ENCODE measurements at regions of chr10 and their contacts with region 1.

Region 1: DNA sequence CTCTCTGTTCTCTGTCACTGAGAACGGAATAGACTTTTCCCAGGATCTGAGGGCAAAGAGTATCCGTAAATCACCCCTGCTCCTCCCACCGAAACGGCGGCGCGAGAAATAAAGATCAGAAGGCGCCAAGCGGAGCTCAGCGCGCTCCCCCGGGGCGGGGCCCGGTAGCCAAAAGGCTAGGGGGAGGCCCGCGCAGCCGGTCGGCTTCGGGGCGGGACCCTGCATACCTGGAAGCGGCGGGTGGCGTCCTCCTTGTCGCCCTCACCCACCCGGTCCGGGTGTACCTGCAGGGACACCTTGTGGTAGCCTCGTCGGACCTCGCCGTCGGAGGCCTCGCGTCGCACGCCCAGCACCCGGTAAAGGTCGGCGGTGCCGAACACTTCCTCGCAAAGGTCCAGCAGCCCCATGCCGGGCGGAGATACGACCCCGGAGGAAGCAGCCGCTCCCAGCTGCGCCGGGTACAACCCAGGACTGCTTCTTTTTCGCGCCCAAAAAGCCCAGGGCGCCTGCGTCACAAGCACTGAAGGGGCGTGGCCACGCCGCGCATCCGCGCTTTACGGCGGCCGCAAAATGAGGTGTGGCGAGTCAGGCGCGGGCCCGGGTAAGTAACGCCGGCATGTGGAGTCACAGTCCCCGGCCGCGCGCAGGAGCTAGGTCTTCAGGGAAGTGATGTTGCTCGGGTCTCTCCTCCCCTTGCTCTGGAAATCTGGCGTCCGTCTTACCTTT is at the start of gene DNAJC9:
- DNase-seq: peak; percentile 94 to 99 (median 97)
- ATAC-seq: peak; percentile 85
- H3K4me3 ChIP-seq: peak within 1 kb of the TSS; percentile 81
- H3K4me3 Mint-ChIP-seq: peak within 1 kb of the TSS; percentile 96
- H3K27ac ChIP-seq: peak within 1 kb of the TSS; percentile 81 to 94
- H3K27ac Mint-ChIP-seq: peak within 1 kb of the TSS; percentile 86
- H3K4me1 ChIP-seq: peaks cover 26% of the 10 kb centered on the region
- H3K4me1 Mint-ChIP-seq: peaks cover 68% of the 10 kb centered on the region
- H3K27me3 ChIP-seq: no peaks in the 10 kb centered on the region
- H3K27me3 Mint-ChIP-seq: no peaks in the 10 kb centered on the region
- CTCF ChIP-seq: no peak
- total RNA-seq, gene DNAJC9: 15.4 to 15.8 TPM

Region 2: GRCh38 chr10:72354478-72355213 is 892.3 kb before region 1 on chr10 and contains the start of gene DNAJB12:
- CTCF ChIA-PET with region 1: no interaction called
- POLR2A ChIA-PET with region 1: no interaction called
- intact Hi-C with region 1: loop called in 1 of 2 experiments (anchors 2 kb)
- DNase-seq: peak; percentile 78 to 96 (median 88)
- ATAC-seq: peak; percentile 86
- H3K4me3 ChIP-seq: peak within 1 kb of the TSS; percentile 95
- H3K4me3 Mint-ChIP-seq: peak within 1 kb of the TSS; percentile 99
- H3K27ac ChIP-seq: peak within 1 kb of the TSS; percentile 95 to 97
- H3K27ac Mint-ChIP-seq: peak within 1 kb of the TSS; percentile 92
- H3K4me1 ChIP-seq: peaks cover 28% of the 10 kb centered on the region
- H3K4me1 Mint-ChIP-seq: peaks cover 47% of the 10 kb centered on the region
- H3K27me3 ChIP-seq: no peaks in the 10 kb centered on the region
- H3K27me3 Mint-ChIP-seq: no peaks in the 10 kb centered on the region
- CTCF ChIP-seq: no peak
- total RNA-seq, gene DNAJB12: 25.2 to 27.0 TPM

Region 3: GRCh38 chr10:72625608-72626443 is 621.1 kb before region 1 on chr10 and contains the start of gene MICU1:
- CTCF ChIA-PET with region 1: no interaction called
- POLR2A ChIA-PET with region 1: no interaction called
- intact Hi-C with region 1: loop called in 1 of 2 experiments (anchors 10 kb)
- DNase-seq: peak; percentile 85 to 97 (median 92)
- ATAC-seq: peak; percentile 99
- H3K4me3 ChIP-seq: peak within 1 kb of the TSS; percentile 92
- H3K4me3 Mint-ChIP-seq: peak within 1 kb of the TSS; percentile 99
- H3K27ac ChIP-seq: peak within 1 kb of the TSS; percentile 15 to 42
- H3K27ac Mint-ChIP-seq: peak within 1 kb of the TSS; percentile 83
- H3K4me1 ChIP-seq: peaks cover 16% of the 10 kb centered on the region
- H3K4me1 Mint-ChIP-seq: peaks cover 26% of the 10 kb centered on the region
- H3K27me3 ChIP-seq: no peaks in the 10 kb centered on the region
- H3K27me3 Mint-ChIP-seq: no peaks in the 10 kb centered on the region
- CTCF ChIP-seq: no peak
- total RNA-seq, gene MICU1: 9.4 to 12.1 TPM

Region 4: DNA sequence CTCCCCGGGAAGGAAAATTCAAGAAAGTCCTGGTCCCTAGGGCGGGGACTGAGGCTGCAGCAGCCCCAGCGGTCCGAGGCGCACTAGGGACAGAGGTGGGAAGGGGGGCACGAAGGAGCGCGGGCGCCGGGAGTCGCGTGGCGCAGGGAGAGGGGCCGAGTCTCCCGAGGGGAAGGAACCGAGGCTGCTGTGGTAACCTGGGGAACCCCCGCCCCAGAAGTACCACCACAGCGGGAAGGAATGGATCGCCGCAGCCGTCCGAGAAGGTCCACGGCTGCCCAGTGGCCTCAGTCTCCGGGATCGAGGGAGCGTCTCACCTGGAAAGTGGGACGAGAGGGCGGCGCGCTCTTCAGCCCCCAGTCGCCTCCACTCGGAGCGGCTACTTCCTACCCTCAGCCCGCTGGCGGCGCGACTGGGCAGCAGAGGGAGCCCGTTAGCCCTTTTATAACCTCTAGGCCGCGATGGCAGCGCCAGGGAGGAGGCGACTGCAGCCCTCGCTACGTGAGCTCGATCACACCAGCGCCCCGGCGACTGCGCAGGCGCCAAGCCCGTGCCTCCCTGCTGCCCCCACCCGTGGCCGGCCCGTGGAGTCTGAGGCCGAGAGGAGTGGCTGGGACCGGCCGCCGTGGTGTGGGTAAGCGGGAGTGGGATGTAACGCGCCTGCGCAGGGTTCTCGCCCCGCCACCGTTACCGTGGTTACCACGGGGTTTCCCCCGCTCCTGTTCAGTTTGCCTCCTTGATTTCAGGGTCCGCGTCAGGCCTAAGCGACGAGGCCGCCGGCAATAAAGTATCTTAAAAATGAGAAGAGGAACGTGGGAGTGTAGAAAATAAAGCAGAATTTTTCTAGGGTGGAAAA is 150.3 kb before region 1 on chr10 and contains the start of gene P4HA1:
- CTCF ChIA-PET with region 1: interaction called, 3 read pairs
- POLR2A ChIA-PET with region 1: interaction called, 19 read pairs
- intact Hi-C with region 1: loop called in 1 of 2 experiments (anchors 5 kb)
- DNase-seq: peak; percentile 93 to 100 (median 97)
- ATAC-seq: peak; percentile 84
- H3K4me3 ChIP-seq: peak within 1 kb of the TSS; percentile 97
- H3K4me3 Mint-ChIP-seq: peak within 1 kb of the TSS; percentile 94
- H3K27ac ChIP-seq: peak within 1 kb of the TSS; percentile 89 to 98
- H3K27ac Mint-ChIP-seq: peak within 1 kb of the TSS; percentile 87
- H3K4me1 ChIP-seq: peaks cover 7% of the 10 kb centered on the region
- H3K4me1 Mint-ChIP-seq: peaks cover 41% of the 10 kb centered on the region
- H3K27me3 ChIP-seq: no peaks in the 10 kb centered on the region
- H3K27me3 Mint-ChIP-seq: no peaks in the 10 kb centered on the region
- CTCF ChIP-seq: peak; percentile 79
- total RNA-seq, gene P4HA1: 9.0 to 9.1 TPM

Region 5: GRCh38 chr10:73233883-73234282 is 13.1 kb before region 1 on chr10:
- CTCF ChIA-PET with region 1: no interaction called
- POLR2A ChIA-PET with region 1: interaction called, 12 read pairs
- intact Hi-C with region 1: no loop called
- DNase-seq: no peak
- ATAC-seq: no peak
- H3K4me3 ChIP-seq: no peak overlapping the region
- H3K4me3 Mint-ChIP-seq: no peak overlapping the region
- H3K27ac ChIP-seq: no peak overlapping the region
- H3K27ac Mint-ChIP-seq: no peak overlapping the region
- H3K4me1 ChIP-seq: no peaks in the 10 kb centered on the region
- H3K4me1 Mint-ChIP-seq: no peaks in the 10 kb centered on the region
- H3K27me3 ChIP-seq: no peaks in the 10 kb centered on the region
- H3K27me3 Mint-ChIP-seq: no peaks in the 10 kb centered on the region
- CTCF ChIP-seq: no peak

Region 6: DNA sequence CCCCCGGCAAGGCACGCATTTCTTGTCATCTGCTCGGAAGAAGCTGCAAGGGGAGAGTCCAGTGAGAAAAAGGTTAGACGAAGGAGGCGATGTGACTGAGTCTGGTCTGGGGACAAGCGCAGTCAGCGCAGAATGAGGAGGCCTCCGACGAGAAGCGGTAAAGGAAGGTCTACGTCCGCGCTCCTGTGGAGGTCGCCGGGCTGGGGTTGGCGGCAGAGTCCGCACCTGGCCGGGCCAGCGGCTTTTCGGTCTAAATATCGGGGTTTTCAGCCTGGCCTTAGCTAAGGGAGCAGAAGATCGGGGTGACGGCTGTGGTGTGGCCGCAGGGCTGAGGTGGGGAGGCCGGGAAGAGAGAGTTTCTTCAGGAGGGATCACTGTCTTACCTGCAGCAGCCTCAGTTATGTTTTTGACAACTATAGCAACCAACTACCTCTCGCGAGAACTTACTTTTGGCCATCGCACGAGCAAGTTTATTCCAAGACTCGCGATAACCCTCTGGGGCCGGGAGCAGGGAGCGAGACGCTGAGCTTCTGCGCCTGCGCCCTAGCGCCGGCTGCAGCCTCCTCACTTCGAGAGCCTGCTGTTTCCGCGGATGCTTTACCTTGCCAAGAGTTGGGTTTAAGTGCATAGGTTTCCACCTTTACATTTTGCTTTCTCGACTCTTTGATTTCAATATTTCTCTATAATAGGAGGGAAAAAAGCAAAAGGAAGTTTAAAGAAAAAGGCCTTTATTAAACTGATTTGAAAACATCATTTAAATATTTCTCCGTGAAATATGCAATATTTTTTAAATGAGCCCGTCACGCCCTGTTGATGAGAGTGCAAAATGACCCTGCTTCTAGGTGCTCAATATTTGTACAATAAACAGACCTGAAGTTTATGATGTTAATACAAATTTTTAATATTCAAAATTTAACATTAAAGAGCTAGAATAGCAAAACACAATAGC is 111.7 kb after region 1 on chr10 and contains the start of gene CFAP70:
- CTCF ChIA-PET with region 1: no interaction called
- POLR2A ChIA-PET with region 1: interaction called, 18 read pairs
- intact Hi-C with region 1: loop called (anchors 2 to 5 kb)
- DNase-seq: peak; percentile 85 to 98 (median 92)
- ATAC-seq: peak; percentile 98
- H3K4me3 ChIP-seq: peak within 1 kb of the TSS; percentile 82
- H3K4me3 Mint-ChIP-seq: peak within 1 kb of the TSS; percentile 98
- H3K27ac ChIP-seq: peak within 1 kb of the TSS; percentile 75 to 83
- H3K27ac Mint-ChIP-seq: peak within 1 kb of the TSS; percentile 95
- H3K4me1 ChIP-seq: peaks cover 7% of the 10 kb centered on the region
- H3K4me1 Mint-ChIP-seq: peaks cover 24% of the 10 kb centered on the region
- H3K27me3 ChIP-seq: no peaks in the 10 kb centered on the region
- H3K27me3 Mint-ChIP-seq: no peaks in the 10 kb centered on the region
- CTCF ChIP-seq: no peak
- total RNA-seq, gene CFAP70: 2.6 TPM

Region 7: DNA sequence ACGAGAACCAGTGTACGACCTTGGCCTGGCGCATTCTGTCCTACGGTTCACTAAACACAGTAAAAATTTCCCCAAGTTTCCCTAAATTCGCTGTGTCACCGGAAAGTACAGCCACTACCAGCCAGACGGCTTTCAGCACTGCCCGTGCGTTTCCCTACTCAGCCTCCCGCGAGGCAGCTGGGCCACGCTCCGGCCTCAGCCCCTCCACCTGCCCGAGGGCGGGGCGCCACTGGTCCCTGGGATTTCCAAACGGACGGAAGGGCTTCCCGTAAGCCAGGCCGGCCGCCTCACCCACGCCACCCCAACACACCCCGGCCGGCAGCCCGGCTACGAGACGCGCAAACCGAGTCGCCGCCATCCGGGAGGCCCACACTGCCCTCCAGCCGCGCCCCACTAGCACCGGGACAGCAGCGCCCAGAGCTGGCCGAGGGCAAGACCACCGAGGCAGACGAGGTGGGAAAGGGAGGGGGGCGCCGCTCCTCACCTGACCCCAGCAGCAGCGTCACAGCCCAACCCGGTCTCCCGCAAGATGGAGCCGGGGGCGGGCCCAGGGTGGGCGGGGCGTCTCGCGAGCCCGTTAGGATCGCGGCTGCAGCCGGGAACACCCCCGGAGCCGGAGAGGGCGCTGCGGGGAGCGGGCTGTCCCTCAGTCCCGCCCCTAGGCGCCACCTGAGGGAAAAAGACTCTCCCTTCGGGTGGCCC is 166.7 kb after region 1 on chr10 and contains the start of gene ANXA7:
- CTCF ChIA-PET with region 1: no interaction called
- POLR2A ChIA-PET with region 1: interaction called, 7 read pairs
- intact Hi-C with region 1: loop called (anchors 2 to 5 kb)
- DNase-seq: peak; percentile 83 to 96 (median 92)
- ATAC-seq: peak; percentile 97
- H3K4me3 ChIP-seq: peak within 1 kb of the TSS; percentile 75
- H3K4me3 Mint-ChIP-seq: peak within 1 kb of the TSS; percentile 91
- H3K27ac ChIP-seq: peak within 1 kb of the TSS; percentile 86 to 98
- H3K27ac Mint-ChIP-seq: peak within 1 kb of the TSS; percentile 84
- H3K4me1 ChIP-seq: peaks cover 36% of the 10 kb centered on the region
- H3K4me1 Mint-ChIP-seq: peaks cover 57% of the 10 kb centered on the region
- H3K27me3 ChIP-seq: no peaks in the 10 kb centered on the region
- H3K27me3 Mint-ChIP-seq: no peaks in the 10 kb centered on the region
- CTCF ChIP-seq: peak; percentile 67
- total RNA-seq, gene ANXA7: 77.7 to 79.6 TPM

Measured in CD4-positive, alpha-beta T cell (primary cell).